Caco-2 (cell line): ENCODE measurements at regions of chr21 and their contacts with region 1.

Region 1: GRCh38 chr21:26961698-26962097 is 5.2 kb downstream of the ADAMTS5 start:
- DNase-seq: no peak
- H3K4me3 ChIP-seq: no peak overlapping the region
- H3K4me3 Mint-ChIP-seq: no peak overlapping the region
- H3K27ac Mint-ChIP-seq: no peak overlapping the region
- H3K4me1 ChIP-seq: no peaks in the 10 kb centered on the region
- H3K4me1 Mint-ChIP-seq: no peaks in the 10 kb centered on the region
- H3K27me3 ChIP-seq: no peaks in the 10 kb centered on the region
- H3K27me3 Mint-ChIP-seq: no peaks in the 10 kb centered on the region
- CTCF ChIP-seq: no peak

Region 2: GRCh38 chr21:26881504-26882228 is 80.0 kb before region 1 on chr21:
- CTCF ChIA-PET with region 1: no interaction called
- POLR2A ChIA-PET with region 1: no interaction called
- intact Hi-C with region 1: no loop called
- DNase-seq: no peak
- H3K4me3 ChIP-seq: no peak overlapping the region
- H3K4me3 Mint-ChIP-seq: no peak overlapping the region
- H3K27ac Mint-ChIP-seq: no peak overlapping the region
- H3K4me1 ChIP-seq: peaks cover 21% of the 10 kb centered on the region
- H3K4me1 Mint-ChIP-seq: peaks cover 11% of the 10 kb centered on the region
- H3K27me3 ChIP-seq: no peaks in the 10 kb centered on the region
- H3K27me3 Mint-ChIP-seq: no peaks in the 10 kb centered on the region
- CTCF ChIP-seq: peak; percentile 8 to 12

Region 3: DNA sequence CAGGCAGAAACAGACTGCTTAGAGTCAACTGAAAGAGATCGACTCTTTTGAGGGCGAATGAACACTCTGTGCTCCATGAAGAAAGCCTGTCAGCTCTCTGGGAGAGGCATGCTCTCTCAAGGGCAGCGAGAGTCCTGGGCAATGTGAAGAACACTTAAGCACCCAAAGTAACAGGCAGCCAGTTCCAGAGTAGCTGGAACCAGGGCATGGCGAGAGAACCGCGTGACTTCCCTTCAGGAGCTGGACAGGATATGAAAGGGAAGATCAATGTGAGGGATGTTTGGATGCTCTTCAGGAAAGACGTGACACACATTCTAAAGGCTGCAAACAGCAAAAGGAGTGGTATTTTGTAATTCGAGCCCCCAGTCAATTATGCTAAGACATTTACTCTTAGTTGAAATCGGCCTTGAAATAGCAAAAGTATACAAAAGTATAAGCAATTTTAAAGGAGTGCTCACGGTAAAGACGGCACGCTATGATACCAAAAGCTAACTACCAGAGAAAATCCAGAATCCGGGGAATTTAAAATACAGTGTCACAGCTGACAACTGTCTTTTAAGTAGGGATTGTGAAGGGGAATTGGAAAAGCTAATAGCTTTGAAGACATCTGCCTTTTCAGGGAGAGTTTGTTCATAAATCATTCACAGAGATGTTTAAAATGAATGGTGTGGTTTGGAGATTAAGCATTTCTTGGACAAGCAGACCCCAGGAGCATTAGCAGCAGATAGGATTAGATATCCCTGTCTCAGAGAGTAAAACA is 15.6 kb before region 1 on chr21:
- CTCF ChIA-PET with region 1: no interaction called
- POLR2A ChIA-PET with region 1: no interaction called
- intact Hi-C with region 1: no loop called
- DNase-seq: no peak
- H3K4me3 ChIP-seq: no peak overlapping the region
- H3K4me3 Mint-ChIP-seq: no peak overlapping the region
- H3K27ac Mint-ChIP-seq: no peak overlapping the region
- H3K4me1 ChIP-seq: no peaks in the 10 kb centered on the region
- H3K4me1 Mint-ChIP-seq: no peaks in the 10 kb centered on the region
- H3K27me3 ChIP-seq: no peaks in the 10 kb centered on the region; the same call in 1 of the 2 replicates
- H3K27me3 Mint-ChIP-seq: peaks cover 6% of the 10 kb centered on the region
- CTCF ChIP-seq: no peak

Region 4: DNA sequence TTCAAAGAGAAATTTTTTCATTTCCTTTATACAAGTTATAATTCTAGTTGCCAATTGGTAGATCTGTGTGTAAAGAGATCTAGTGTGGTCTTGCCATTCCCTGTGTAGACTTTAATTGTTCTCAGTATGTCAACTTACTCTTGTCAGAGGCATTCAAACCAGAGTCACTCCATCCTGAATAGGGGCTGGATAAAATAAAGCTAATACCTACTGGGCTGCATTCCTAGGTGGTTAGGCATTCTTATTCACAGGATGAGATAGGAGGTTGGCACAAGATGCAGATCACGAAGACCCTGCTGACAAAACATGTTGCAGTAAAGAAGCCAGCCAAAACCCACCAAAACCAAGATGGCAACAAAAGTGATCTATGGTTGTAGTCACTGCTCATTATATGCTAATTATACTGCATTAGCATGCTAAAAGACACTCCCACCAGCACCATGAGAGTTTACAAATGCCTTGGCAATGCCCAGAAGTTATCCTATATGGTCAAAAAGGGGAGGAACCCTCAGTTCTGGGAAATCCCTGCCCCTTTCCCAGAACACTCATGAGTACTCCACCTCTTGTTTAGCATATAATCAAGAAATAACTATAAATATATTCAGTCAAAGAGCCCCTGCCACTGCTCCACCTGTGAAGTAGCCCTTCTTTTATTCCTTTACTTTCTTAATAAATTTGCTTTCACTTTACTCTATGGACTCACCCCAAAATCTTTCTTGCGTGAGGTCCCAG is 79.2 kb after region 1 on chr21:
- CTCF ChIA-PET with region 1: no interaction called
- POLR2A ChIA-PET with region 1: no interaction called
- intact Hi-C with region 1: loop called (anchors 5 kb)
- DNase-seq: no peak
- H3K4me3 ChIP-seq: no peak overlapping the region
- H3K4me3 Mint-ChIP-seq: no peak overlapping the region
- H3K27ac Mint-ChIP-seq: no peak overlapping the region
- H3K4me1 ChIP-seq: no peaks in the 10 kb centered on the region
- H3K4me1 Mint-ChIP-seq: no peaks in the 10 kb centered on the region
- H3K27me3 ChIP-seq: no peaks in the 10 kb centered on the region
- H3K27me3 Mint-ChIP-seq: peaks cover 3% of the 10 kb centered on the region
- CTCF ChIP-seq: no peak